Naive thymus-derived CD8-positive, alpha-beta T cell (primary cell): ENCODE measurements at regions of chr3 and their contacts with region 1.

Region 1: GRCh38 chr3:153221748-153222162 is 59.7 kb downstream of the RAP2B start:
- DNase-seq: peak; percentile 34 to 89 (median 75)
- ATAC-seq: peak; percentile 96 to 98
- H3K4me3 Mint-ChIP-seq: peak overlapping the region; percentile 67 to 88 (median 79)
- H3K27ac Mint-ChIP-seq: peak overlapping the region; percentile 90 to 98 (median 96)
- H3K4me1 Mint-ChIP-seq: peaks cover 30 to 69% (median 66%) of the 10 kb centered on the region in 4 donors
- H3K27me3 Mint-ChIP-seq: no peaks in the 10 kb centered on the region

Region 2: DNA sequence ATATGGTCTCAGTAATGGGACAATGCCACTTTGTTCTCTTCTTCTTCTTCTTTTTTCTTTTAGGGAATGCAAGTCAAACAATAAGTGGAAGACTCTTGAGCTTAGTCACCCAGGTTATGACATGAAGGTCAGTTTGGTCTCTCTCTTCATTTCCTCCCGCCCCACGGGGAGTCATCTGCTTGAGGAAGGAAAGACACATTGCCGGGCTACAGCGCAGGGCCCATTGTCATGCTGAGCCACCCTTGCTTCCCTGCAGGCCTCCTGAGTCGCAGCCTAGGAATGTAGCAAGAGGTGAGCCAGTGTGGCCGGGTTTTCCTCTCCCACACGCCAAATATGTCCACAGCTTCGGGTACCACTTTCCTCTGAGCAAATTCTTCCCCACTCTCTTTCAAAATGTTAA is 12.2 kb before region 1 on chr3:
- POLR2A ChIA-PET with region 1: interaction called, 31 read pairs
- DNase-seq: no peak
- ATAC-seq: no peak
- H3K4me3 Mint-ChIP-seq: peak overlapping the region in 8 of 10 donors; percentile 44 to 78 (median 66)
- H3K27ac Mint-ChIP-seq: peak overlapping the region in 9 of 10 donors; percentile 20 to 90 (median 74)
- H3K4me1 Mint-ChIP-seq: peaks cover 12 to 41% (median 32%) of the 10 kb centered on the region in 4 donors
- H3K27me3 Mint-ChIP-seq: no peaks in the 10 kb centered on the region